Esophagus squamous epithelium (tissue), 5 donors: ENCODE measurements at regions of chr12 and their contacts with region 1.

Region 1: GRCh38 chr12:49866859-49867579 is 24.1 kb upstream of the BCDIN3D start:
- DNase-seq: no peak
- H3K4me3 ChIP-seq: no peak overlapping the region
- H3K27ac ChIP-seq: peak overlapping the region; percentile 12 to 64 (median 42)
- H3K4me1 ChIP-seq: peaks cover 23 to 48% (median 24%) of the 10 kb centered on the region in 3 donors
- H3K27me3 ChIP-seq: peaks cover 0 to 6% (median 0%) of the 10 kb centered on the region in 4 donors
- CTCF ChIP-seq: peak; percentile 93 to 99 (median 98)
- POLR2A ChIP-seq: no peak

Region 2: DNA sequence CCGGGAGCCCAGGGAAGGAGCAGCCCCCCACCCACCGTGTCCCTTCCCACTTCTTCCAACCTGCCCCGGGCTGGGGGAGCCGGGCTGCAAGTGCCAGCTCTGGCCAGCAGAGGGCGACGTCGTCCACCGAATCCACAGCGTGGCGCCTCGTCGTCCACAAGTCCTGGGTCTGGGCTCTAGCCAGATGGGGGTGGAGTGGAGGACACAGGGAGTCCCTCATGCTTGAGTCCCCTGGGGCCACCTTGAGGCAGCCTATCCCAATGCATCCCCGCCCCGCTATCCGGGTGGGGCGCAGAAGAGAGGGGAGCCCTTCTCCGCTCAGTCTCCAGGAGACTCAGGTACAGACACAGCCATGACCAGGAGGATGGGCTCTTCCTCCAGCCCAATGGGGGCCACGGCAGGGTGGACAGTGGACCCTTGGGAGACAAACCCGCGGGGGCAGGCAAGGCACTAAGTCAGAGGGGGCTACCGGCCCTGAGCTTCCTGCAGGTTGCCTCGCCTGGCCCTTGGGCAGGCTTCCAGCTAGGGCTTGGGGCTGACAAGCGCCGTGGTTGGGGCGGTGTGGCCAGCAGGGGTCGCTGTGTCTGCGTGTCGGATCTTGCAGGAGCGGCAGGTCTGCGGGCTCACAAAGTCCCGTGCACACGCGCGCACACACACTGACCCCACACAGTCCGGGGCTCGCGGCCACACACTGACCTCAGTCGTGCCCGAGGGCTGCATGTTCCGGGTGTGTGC is 100.2 kb after region 1 on chr12:
- intact Hi-C with region 1: loop called (anchors 10 kb)
- DNase-seq: peak; percentile 18
- H3K4me3 ChIP-seq: peak overlapping the region; percentile 25 to 66 (median 42)
- H3K27ac ChIP-seq: peak overlapping the region in 2 of 4 donors; percentile 16 to 37
- H3K4me1 ChIP-seq: peaks cover 18 to 43% (median 25%) of the 10 kb centered on the region in 3 donors
- H3K27me3 ChIP-seq: peaks cover 0 to 87% (median 0%) of the 10 kb centered on the region in 4 donors
- CTCF ChIP-seq: peak; percentile 78 to 97 (median 94)
- POLR2A ChIP-seq: no peak

Region 3: DNA sequence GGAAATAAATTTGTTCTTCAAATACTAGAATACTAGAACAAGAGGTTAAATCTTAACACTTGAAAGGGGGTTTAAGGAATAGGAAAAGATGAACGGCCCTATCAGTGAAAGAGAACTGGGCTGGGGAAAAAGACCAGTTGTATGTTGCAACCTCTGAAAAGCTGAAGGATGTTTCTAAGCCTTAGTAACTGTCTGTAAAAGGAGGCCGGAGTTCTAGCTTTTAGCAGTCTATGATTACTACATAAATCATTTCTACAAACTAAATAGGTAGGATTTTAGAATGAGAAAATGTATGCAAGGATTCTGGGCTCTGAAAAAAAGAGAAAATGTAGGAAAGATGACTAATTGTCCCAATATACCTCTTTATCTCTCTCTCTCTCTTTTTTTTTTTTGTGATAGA is 295.2 kb after region 1 on chr12:
- intact Hi-C with region 1: no loop called
- DNase-seq: no peak
- H3K4me3 ChIP-seq: no peak overlapping the region
- H3K27ac ChIP-seq: peak overlapping the region in 1 of 4 donors; percentile 2
- H3K4me1 ChIP-seq: peaks cover 9 to 41% (median 10%) of the 10 kb centered on the region in 3 donors
- H3K27me3 ChIP-seq: no peaks in the 10 kb centered on the region
- CTCF ChIP-seq: no peak
- POLR2A ChIP-seq: no peak